ENCODE measurements at regions of chr7 and their contacts with region 1.

Region 1: DNA sequence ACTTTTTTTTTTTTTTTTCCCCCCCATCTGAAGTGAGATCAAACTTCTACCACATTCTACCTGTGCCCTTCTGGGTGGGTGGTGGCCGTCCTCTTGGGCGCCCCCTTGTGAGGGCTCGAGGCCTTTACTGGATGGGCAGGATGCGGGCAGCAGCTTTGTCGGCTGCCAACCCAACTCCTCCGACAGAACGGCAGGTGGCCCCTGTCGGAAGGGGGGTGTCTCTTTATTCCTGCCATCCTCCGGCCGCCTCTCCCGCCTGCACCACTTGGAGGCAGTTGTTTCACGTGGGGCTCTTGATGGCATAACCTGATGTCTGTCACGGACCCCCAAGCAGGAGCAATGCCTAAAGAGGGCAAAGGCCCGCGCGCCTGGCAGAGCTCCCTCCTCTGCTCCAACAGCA is 31.0 kb downstream of the AMZ1 start:
- DNase-seq: peak; percentile 30 to 69 (median 56)
- ATAC-seq: no peak
- H3K4me3 ChIP-seq: no peak overlapping the region
- H3K27ac ChIP-seq: no peak overlapping the region
- H3K4me1 ChIP-seq: peaks cover 36 to 59% of the 10 kb centered on the region in 2 experiments
- H3K27me3 ChIP-seq: no peaks in the 10 kb centered on the region
- CTCF ChIP-seq: peak; percentile 46 to 58 (median 50); a peak in 5 of 6 replicates
- EP300 ChIP-seq: no peak
- POLR2A ChIP-seq: no peak
- RAD21 ChIP-seq: peak in 1 of 2 experiments; percentile 15; a peak in 1 of 4 replicates

Region 2: GRCh38 chr7:2729701-2730417 is 10.9 kb after region 1 on chr7:
- CTCF ChIA-PET with region 1: no interaction called
- POLR2A ChIA-PET with region 1: interaction called, 12 read pairs
- in situ Hi-C with region 1: no loop called
- intact Hi-C with region 1: no loop called
- DNase-seq: no peak
- ATAC-seq: no peak
- H3K4me3 ChIP-seq: no peak overlapping the region
- H3K27ac ChIP-seq: no peak overlapping the region
- H3K4me1 ChIP-seq: peaks cover 25 to 37% of the 10 kb centered on the region in 2 experiments
- H3K27me3 ChIP-seq: no peaks in the 10 kb centered on the region
- CTCF ChIP-seq: no peak
- EP300 ChIP-seq: no peak
- POLR2A ChIP-seq: no peak
- RAD21 ChIP-seq: no peak

Region 3: GRCh38 chr7:3239291-3239691 is 520.3 kb after region 1 on chr7:
- CTCF ChIA-PET with region 1: no interaction called
- POLR2A ChIA-PET with region 1: no interaction called
- in situ Hi-C with region 1: no loop called
- intact Hi-C with region 1: no loop called
- DNase-seq: no peak
- ATAC-seq: no peak
- H3K4me3 ChIP-seq: no peak overlapping the region
- H3K27ac ChIP-seq: no peak overlapping the region
- H3K4me1 ChIP-seq: no peaks in the 10 kb centered on the region
- H3K27me3 ChIP-seq: peaks cover 3 to 23% of the 10 kb centered on the region in 2 experiments; a peak in 4 of 5 replicates
- CTCF ChIP-seq: no peak
- EP300 ChIP-seq: no peak
- POLR2A ChIP-seq: no peak
- RAD21 ChIP-seq: no peak